ENCODE measurements at regions of chr20 and their contacts with region 1.

Region 1: GRCh38 chr20:36199345-36200257 is 36.7 kb upstream of the AAR2 start:
- DNase-seq: peak; percentile 81
- CTCF ChIP-seq: peak; percentile 85

Region 2: GRCh38 chr20:36439040-36439730 is 239.6 kb after region 1 on chr20:
- in situ Hi-C with region 1: loop called (anchors 10 kb)
- DNase-seq: peak; percentile 85
- CTCF ChIP-seq: peak; percentile 97

Region 3: GRCh38 chr20:36886859-36887751 is 687.5 kb after region 1 on chr20:
- in situ Hi-C with region 1: loop called (anchors 25 kb)
- DNase-seq: peak; percentile 89
- CTCF ChIP-seq: peak; percentile 95

Measured in GM13976 (cell line).